Ovary (tissue), 10 donors: ENCODE measurements at regions of chr13 and their contacts with region 1.

Region 1: DNA sequence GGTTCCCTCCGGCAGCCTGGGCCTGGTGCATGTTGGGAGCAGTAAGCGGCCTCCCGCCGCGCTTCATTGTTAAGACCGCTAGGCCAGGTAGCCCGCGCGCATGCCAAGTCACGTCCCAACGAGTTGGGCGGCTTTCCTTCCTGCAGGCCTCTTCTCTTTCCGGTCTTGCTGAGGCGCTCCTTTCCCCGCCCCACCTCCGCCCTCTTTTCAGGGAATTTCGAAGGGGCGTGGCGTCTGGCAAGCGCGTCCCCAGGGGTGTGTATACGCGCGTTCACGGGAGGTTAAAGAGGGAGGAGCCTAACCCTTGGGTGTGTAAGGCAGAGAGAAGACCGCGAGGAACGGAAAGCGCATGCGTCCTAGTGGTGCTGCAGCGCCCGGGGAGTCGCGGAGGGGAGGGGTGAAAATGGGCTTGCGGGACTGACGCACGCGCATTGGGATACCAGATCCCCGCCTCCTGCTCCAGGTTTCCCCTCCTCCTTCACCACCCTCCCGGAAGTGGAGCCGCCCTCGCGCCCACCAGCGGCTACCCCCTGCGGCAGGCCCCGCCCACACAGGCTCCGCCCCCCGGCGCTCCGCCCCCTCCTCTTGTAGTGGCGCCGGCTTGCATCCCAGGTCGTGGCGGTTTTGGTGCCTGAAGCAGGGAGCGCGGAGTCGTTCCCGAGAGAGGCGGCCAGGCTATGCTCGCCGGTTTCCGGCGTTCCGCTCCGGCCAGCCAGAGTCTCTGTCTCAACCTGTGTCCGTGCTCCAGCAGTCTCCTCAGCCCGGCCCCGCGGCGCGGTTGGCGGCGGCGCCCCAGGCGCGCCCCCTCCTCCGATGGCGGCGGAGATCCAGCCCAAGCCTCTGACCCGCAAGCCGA is at the start of gene WDFY2:
- DNase-seq: peak; percentile 99 to 100 (median 100)
- H3K4me3 ChIP-seq: peak within 1 kb of the TSS; percentile 93
- H3K27ac ChIP-seq: peak within 1 kb of the TSS; percentile 80 to 89
- H3K4me1 ChIP-seq: peaks cover 14% of the 10 kb centered on the region
- H3K27me3 ChIP-seq: no peaks in the 10 kb centered on the region
- CTCF ChIP-seq: peak in 2 of 3 donors; percentile 6 to 9
- EP300 ChIP-seq: peak; percentile 52
- POLR2A ChIP-seq: peak; percentile 82
- total RNA-seq, gene WDFY2: 9.9 to 17.9 (median 14.9) TPM

Region 2: DNA sequence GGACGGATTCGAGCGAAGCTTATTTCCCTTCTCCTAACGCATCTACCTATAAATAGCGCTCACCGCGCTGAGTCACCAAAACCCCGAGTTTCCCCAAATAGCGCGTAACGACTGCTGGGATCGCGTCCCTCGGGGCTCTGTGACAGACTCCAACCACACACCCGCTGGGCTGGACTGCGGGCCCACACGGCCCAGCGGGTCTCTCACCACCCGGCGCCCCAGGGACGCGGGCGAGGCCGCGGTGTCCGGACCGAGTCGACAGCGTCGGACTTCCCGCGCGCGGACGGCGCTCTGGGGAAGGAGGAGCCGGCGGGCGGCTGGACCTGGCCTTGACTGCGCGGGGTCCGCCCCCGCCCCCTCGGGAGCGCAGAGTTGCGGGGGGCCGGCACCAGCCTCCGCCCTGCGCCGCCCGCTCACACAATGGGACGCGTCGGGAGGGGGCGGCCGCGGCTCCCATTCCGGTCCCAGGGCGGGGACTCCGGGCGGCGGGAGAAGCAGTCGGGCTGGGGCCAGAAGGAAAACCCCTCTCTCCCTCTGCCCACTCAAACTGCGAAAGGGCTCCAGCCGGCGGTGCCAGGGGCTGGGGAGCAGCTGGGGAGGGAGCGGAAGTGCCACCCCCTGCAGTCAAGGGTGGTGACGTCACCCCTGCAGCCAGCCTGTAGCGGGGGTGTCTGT is 1460.1 kb before region 1 on chr13:
- intact Hi-C with region 1: loop called in 1 of 4 experiments (anchors 10 kb)
- DNase-seq: peak in 1 of 5 donors; percentile 80
- H3K4me3 ChIP-seq: peak overlapping the region; percentile 83
- H3K27ac ChIP-seq: peak overlapping the region; percentile 70 to 97
- H3K4me1 ChIP-seq: peaks cover 2% of the 10 kb centered on the region
- H3K27me3 ChIP-seq: peaks cover 4% of the 10 kb centered on the region
- CTCF ChIP-seq: peak in 2 of 3 donors; percentile 11 to 24
- EP300 ChIP-seq: peak; percentile 34
- POLR2A ChIP-seq: peak; percentile 82

Region 3: DNA sequence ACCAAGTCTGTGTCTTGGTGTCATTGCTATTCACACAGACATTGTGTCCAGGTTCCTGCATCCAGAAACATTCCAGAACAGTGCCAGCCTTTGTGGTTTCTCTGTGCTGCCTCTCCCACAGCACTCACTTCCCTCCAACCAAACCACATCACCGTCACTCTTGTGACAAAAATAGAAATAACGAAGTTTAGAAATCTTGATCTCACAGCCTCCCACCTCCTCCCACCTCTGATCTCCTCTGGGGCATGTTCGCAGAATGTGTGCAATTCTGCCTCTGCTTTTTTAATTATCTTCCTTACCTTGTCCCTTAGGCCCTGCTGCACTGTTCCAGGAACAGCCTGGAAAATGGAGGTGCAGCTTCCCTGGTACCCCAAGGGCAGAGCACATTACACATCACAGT is 253.3 kb before region 1 on chr13:
- intact Hi-C with region 1: no loop called
- DNase-seq: no peak
- H3K4me3 ChIP-seq: no peak overlapping the region
- H3K27ac ChIP-seq: no peak overlapping the region
- H3K4me1 ChIP-seq: no peaks in the 10 kb centered on the region
- H3K27me3 ChIP-seq: no peaks in the 10 kb centered on the region
- CTCF ChIP-seq: no peak
- EP300 ChIP-seq: no peak
- POLR2A ChIP-seq: no peak

Region 4: DNA sequence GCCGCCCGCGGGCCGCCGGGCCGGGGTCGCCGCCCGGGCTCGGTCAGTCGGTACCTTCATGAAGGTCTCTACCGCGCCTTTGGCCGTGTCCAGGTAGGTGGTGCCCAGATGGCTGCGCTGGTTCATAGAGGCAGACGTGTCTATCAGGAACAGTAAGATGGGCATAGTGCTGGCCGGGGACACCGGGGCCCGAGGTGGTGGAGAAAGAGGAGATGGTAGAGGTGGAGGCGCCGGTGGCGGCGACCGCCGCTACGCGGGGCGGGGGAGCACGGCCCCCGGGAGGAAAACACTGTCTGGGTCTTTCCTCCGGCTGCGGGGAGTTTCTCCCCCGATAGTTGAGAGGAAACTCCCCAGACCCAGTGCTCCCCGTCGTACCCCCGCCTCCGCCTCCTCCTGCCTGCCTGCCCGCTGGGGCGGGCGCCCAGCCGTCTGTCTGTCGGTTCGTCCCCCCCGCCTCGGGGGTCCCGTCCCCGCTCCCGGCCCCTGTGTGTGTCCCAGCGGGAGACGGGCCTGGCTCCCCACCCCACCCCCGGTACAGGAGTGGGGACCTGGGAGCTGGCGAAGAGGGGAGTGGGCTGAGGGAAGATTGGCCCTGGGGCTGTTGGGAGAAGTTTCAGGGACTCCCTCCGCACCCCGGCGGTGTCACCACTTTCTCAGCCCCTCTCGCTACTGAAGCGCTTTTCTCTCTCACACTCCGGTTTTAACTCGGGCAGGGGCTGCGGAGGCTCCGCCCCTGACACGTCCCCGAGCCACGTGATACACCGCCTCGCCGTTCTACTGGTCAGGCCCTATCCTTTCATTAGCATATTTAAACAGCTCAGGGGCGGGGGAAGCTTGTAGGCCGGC is 131.5 kb before region 1 on chr13 and contains the start of gene INTS6:
- intact Hi-C with region 1: loop called in 3 of 4 experiments (anchors 2 to 10 kb)
- DNase-seq: peak; percentile 99 to 100 (median 99)
- H3K4me3 ChIP-seq: peak within 1 kb of the TSS; percentile 79
- H3K27ac ChIP-seq: peak within 1 kb of the TSS; percentile 94 to 100
- H3K4me1 ChIP-seq: no peaks in the 10 kb centered on the region
- H3K27me3 ChIP-seq: no peaks in the 10 kb centered on the region
- CTCF ChIP-seq: no peak
- EP300 ChIP-seq: no peak
- POLR2A ChIP-seq: peak; percentile 97
- total RNA-seq, gene INTS6: 26.7 to 38.9 (median 31.0) TPM

Region 5: DNA sequence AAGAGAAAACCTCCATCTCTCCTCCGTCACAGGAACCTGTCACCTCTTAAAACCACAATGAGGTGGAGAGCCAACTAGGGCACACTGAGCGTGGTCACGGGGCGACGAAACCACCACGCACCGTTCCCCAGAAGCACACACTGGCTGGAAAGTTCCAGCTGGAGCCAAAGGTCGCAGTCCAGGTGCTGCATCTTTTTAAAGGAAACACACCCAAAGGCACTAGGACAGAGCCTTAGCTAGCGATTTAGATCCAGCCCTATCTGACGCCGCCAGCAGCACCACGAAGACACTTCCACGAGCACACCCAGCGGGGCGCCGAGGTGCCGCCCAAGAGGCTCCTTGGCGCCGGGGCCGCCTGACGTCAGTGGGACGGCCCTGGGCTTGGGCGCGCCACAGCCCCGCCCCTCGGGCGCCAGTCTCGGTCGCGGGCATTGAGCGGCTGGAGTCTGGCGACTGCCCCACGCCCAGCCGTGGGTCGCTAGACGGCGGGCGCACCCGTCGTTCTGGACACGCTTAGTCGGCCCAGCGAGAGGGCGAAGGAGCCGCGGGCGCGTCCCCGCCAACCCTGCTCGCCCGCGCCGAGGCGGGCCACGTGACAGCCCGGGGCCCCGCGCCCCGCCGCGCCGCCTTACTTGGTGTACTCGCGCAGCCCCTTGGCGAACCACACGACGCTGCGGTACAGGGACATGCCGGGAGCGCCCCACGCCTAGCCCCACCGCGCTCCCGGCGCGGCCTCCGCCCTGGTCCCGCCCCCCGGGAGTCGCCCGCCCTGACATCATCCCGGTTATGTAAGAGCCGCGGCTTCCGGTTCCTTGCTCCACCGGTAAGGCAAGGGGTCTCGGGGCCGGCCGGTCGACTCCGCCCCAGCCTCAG is 219.6 kb after region 1 on chr13 and contains the start of gene DHRS12:
- intact Hi-C with region 1: loop called in 3 of 4 experiments (anchors 10 kb)
- DNase-seq: peak; percentile 94 to 95 (median 94)
- H3K4me3 ChIP-seq: peak within 1 kb of the TSS; percentile 68
- H3K27ac ChIP-seq: peak within 1 kb of the TSS; percentile 100
- H3K4me1 ChIP-seq: peaks cover 22% of the 10 kb centered on the region
- H3K27me3 ChIP-seq: no peaks in the 10 kb centered on the region
- CTCF ChIP-seq: no peak
- EP300 ChIP-seq: peak; percentile 60
- POLR2A ChIP-seq: peak; percentile 85
- total RNA-seq, gene DHRS12: 9.7 to 19.7 (median 16.2) TPM